Mammary epithelial cell (primary cell): ENCODE measurements at regions of chr3 and their contacts with region 1.

Region 1: GRCh38 chr3:158727206-158728060 is 4.8 kb downstream of the RARRES1 start:
- DNase-seq: peak; percentile 58
- H3K4me3 ChIP-seq: no peak overlapping the region
- H3K27ac ChIP-seq: no peak overlapping the region
- H3K4me1 ChIP-seq: peaks cover 33% of the 10 kb centered on the region
- H3K27me3 ChIP-seq: no peaks in the 10 kb centered on the region
- CTCF ChIP-seq: peak; percentile 77 to 95

Region 2: DNA sequence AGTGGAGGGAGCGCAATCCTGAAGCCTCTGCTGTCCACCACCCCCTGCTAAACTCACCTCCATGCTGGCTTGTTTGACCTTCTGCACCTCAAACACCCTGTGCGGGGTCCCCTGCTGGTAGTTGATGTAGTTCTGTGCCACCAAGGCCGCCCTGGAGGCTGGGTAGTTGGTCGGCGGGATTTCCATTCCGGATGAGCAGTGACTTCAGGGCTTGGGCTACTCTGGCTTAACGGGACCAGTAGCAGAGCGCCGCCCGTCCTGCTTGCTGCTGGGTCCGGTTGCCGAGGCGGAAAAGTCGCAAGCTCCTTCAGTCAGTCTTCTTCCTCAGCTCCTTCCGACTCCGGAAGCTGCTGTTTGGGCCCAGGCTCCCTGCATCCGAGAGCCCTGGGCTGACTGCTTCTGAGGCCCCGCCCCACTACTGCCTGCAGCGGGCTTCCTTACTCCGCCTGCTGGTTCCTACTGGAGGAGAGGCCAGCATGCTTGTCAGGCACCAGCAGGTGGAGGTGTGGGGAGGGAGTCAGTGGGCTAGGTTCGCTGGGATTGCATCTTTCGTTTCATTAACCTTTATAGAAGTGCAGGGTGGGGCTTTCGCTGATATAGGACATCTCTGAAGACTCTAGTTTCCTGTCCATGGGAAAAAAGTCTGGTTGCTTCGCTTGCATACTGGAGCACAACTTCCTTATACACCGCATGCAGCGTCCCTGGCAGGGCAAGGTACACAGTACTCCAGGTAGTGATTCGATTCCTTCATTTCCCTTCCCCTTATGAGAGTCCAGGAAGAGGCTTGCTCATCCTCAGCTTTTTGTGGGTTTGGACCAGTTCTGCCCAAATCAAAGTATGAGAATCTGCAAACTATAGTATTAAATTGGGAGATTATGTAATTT is 54.9 kb before region 1 on chr3 and contains the start of gene LXN:
- CTCF ChIA-PET with region 1: no interaction called
- dilution Hi-C with region 1: no loop called
- in situ Hi-C with region 1: no loop called
- intact Hi-C with region 1: loop called (anchors 5 kb)
- DNase-seq: peak; percentile 89
- H3K4me3 ChIP-seq: peak within 1 kb of the TSS; percentile 44 to 65 (median 57)
- H3K27ac ChIP-seq: peak within 1 kb of the TSS; percentile 24
- H3K4me1 ChIP-seq: peaks cover 11% of the 10 kb centered on the region
- H3K27me3 ChIP-seq: no peaks in the 10 kb centered on the region
- CTCF ChIP-seq: peak; percentile 64 to 94
- total RNA-seq, gene LXN: 6.4 to 9.2 TPM

Region 3: GRCh38 chr3:158773845-158774830 is 46.7 kb after region 1 on chr3:
- CTCF ChIA-PET with region 1: no interaction called
- dilution Hi-C with region 1: no loop called
- in situ Hi-C with region 1: no loop called
- intact Hi-C with region 1: loop called (anchors 1 kb)
- DNase-seq: peak; percentile 73
- H3K4me3 ChIP-seq: no peak overlapping the region
- H3K27ac ChIP-seq: no peak overlapping the region
- H3K4me1 ChIP-seq: peaks cover 36% of the 10 kb centered on the region
- H3K27me3 ChIP-seq: no peaks in the 10 kb centered on the region
- CTCF ChIP-seq: peak in 1 of 2 donors; percentile 9

Region 4: GRCh38 chr3:158991146-158991705 is 263.8 kb after region 1 on chr3:
- CTCF ChIA-PET with region 1: no interaction called
- dilution Hi-C with region 1: no loop called
- in situ Hi-C with region 1: no loop called
- intact Hi-C with region 1: no loop called
- DNase-seq: peak; percentile 49
- H3K4me3 ChIP-seq: no peak overlapping the region
- H3K27ac ChIP-seq: no peak overlapping the region
- H3K4me1 ChIP-seq: no peaks in the 10 kb centered on the region
- H3K27me3 ChIP-seq: peaks cover 3% of the 10 kb centered on the region
- CTCF ChIP-seq: no peak